Heart left ventricle (tissue), 16 donors: ENCODE measurements at regions of chr1 and their contacts with region 1.

Region 1: DNA sequence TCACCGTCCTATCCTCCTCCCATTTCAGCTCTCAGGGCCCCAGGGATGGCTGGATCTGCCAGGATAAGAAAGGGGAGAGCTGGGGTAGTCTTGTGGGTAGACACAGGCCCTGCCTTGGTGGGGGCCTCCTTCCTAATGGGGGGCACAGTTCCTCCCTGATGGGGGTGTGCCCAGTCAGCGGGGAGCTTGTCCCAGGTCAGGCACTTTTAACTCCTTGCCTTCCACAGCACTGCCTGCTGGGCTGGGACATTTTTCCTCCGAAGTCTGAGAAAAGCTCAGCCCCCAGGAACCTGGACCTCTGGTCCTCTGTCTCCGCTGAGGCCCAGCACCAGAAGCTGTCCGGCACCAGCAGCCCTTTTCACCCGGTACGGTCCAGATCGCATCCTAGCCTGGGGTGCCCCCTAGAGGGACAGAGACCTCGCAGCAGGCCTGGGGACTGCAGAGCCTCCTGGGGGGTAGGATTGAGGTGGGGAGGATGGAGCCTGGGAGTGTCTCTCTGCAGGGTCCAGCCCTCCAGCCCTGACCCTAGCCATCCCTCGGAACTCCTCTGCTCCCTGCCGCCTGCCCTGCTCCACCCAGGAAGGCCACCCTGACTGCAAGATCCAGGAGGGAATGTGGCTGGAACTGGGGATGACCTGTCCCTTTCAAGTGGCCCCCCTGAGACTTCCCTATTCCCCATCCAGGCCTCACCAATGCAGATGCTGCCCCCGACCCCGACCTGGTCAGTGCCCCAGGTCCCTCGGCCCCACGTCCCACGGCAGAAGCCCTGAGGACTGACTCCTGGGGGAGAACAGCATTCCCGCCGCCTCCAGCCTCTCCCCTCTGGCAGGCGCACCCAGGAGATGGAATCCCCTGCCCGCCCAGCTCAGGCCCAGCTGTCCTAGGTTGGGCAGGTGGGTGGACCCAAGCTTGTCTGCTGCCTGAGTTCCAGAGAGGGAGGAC is 12.0 kb downstream of the MIIP start:
- DNase-seq: peak in 3 of 5 donors; percentile 37 to 68 (median 48)
- ATAC-seq: peak; percentile 57 to 82 (median 72)
- H3K4me3 ChIP-seq: no peak overlapping the region
- H3K27ac ChIP-seq: no peak overlapping the region
- H3K4me1 ChIP-seq: peaks cover 0 to 6% (median 0%) of the 10 kb centered on the region in 12 donors
- H3K27me3 ChIP-seq: no peaks in the 10 kb centered on the region
- CTCF ChIP-seq: peak; percentile 39 to 65 (median 55)
- POLR2A ChIP-seq: no peak

Region 2: DNA sequence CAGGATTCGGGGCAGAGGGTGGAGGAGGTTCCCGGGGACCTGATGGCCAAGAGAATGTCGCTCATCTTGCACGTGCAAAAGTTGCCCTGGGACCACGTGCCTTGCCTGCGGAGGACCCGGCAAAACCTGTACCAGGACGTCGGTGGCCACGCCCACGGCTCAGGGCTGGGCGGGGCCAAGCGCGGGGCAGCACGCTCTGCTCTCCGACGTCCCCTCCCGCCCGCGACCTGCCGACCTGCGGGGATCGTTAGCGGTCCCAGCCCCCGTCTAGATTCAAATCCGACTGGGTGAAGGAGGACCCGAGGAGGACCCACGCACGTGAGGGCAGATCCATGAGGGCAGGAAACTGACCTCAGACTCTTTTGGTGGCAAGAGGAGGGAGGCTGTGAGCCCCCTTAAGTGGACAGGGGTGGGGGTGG is 269.3 kb before region 1 on chr1 and contains the start of gene C1orf167:
- intact Hi-C with region 1: no loop called
- DNase-seq: no peak
- ATAC-seq: peak in 3 of 4 donors; percentile 20 to 26 (median 20)
- H3K4me3 ChIP-seq: no peak within 1 kb of the TSS
- H3K27ac ChIP-seq: no peak within 1 kb of the TSS
- H3K4me1 ChIP-seq: peaks cover 0 to 6% (median 0%) of the 10 kb centered on the region in 12 donors
- H3K27me3 ChIP-seq: peaks cover 6 to 21% (median 14%) of the 10 kb centered on the region in 9 donors
- CTCF ChIP-seq: no peak
- POLR2A ChIP-seq: no peak
- total RNA-seq, gene C1orf167: 1.5 to 7.6 (median 3.1) TPM

Region 3: DNA sequence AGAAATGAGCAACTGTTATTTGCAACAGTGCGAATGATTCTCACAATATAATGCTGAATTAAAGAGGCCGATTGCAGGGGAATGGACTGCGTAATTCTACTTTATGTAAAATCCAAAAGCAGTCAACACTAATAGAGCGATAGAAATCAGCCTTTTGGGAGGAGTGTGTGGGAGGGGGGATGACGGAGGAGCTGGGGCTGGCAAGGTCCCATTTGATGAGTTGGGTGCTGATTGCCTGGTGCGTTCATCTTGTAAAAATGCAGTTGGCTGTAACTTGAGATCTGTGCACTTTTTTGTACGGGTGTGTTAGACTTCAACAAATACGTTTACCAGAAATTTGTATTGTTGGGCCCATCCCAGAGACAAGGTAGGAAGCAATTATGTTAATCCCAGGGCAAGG is 52.5 kb after region 1 on chr1:
- intact Hi-C with region 1: loop called in 1 of 10 experiments (anchors 5 kb)
- DNase-seq: no peak
- ATAC-seq: no peak
- H3K4me3 ChIP-seq: no peak overlapping the region
- H3K27ac ChIP-seq: no peak overlapping the region
- H3K4me1 ChIP-seq: peaks cover 0 to 9% (median 0%) of the 10 kb centered on the region in 12 donors
- H3K27me3 ChIP-seq: no peaks in the 10 kb centered on the region
- CTCF ChIP-seq: no peak
- POLR2A ChIP-seq: no peak

Region 4: DNA sequence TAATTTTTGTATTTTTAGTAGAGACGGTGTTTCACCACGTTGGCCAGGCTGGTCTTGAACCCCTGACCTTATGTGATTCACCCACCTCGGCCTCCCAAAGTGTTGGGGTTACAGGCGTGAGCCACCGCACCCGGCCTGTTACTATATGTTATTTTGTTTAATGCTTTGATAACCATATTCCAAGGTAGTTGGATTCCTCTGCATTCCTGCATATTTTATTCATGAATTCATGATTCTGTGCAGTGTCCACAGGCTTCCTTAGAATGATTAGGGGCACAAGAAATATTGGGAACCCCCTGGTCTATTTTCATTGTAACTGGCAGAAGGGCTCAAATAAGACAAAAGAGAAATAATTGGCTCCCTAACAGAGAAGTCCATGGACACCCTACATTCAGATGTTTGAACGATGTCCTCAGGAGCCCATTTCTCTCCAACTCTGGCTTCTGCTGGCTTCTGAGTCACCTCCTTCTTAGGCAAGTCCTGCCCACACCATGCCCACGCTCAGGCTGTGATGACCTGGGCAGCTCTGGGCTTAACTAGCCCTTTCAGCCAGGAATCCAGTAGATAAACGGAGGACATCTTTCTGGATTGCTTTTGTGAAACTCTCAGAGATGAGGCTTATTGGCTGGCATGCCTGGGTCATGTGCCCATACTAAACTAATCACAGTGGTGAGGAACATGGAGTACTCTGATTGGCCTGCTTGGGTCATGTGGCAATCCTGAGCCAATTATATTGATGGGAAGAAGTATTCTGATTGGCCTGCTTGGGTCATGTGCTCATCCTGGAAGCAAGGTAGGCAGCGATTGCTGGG is 64.3 kb after region 1 on chr1:
- intact Hi-C with region 1: loop called in 1 of 10 experiments (anchors 10 kb)
- DNase-seq: peak in 1 of 5 donors; percentile 9
- ATAC-seq: no peak
- H3K4me3 ChIP-seq: no peak overlapping the region
- H3K27ac ChIP-seq: no peak overlapping the region
- H3K4me1 ChIP-seq: no peaks in the 10 kb centered on the region
- H3K27me3 ChIP-seq: no peaks in the 10 kb centered on the region
- CTCF ChIP-seq: no peak
- POLR2A ChIP-seq: no peak

Region 5: GRCh38 chr1:12124693-12125421 is 93.5 kb after region 1 on chr1:
- intact Hi-C with region 1: no loop called
- DNase-seq: peak; percentile 76 to 87 (median 80)
- ATAC-seq: peak; percentile 49 to 82 (median 76)
- H3K4me3 ChIP-seq: peak overlapping the region in 2 of 12 donors; percentile 16 to 23
- H3K27ac ChIP-seq: peak overlapping the region in 9 of 12 donors; percentile 6 to 75 (median 60)
- H3K4me1 ChIP-seq: peaks cover 4 to 30% (median 14%) of the 10 kb centered on the region in 12 donors
- H3K27me3 ChIP-seq: peaks cover 0 to 6% (median 0%) of the 10 kb centered on the region in 9 donors
- CTCF ChIP-seq: peak in 11 of 12 donors; percentile 90 to 99 (median 97)
- POLR2A ChIP-seq: peak in 1 of 2 donors; percentile 6